Activated CD4-positive, alpha-beta T cell treated with anti-CD3 and anti-CD28 coated beads for 36 hours (primary cell): ENCODE measurements at regions of chr3 and their contacts with region 1.

Region 1: DNA sequence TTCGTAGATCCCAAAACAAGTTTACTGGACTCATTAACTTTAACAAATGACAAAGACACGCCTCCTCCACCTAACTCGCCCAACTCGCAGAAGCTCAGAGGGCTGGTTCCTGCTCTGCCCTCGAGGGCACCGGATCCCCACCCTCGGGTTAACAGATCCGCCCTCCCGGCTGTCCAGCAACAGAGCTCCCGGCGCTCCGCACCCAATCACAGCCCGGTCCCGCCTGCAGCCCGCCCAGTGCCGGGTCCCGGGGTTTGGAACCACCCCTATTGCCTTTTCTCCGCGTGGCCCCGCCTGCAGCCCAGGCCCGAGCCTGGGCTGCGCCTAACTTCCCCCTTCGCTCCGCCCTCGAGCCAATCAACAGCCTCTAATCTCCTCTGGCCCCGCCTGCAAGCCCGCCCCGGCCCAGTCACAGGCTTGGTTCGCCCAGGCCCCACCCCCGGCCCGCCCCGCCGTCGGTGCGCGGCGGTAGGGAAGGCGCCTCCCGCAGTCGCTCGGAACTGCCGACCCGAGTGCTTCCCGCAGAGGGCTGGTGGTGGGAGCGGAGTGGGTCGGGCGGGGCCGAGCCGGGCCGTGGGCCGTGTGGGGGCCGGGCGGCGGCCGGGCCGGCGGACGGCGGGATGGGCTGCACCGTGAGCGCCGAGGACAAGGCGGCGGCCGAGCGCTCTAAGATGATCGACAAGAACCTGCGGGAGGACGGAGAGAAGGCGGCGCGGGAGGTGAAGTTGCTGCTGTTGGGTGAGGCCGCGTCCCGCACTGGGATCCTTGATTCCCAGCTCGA is at the start of gene GNAI2:
- DNase-seq: peak; percentile 99
- ATAC-seq: peak; percentile 92
- H3K4me3 Mint-ChIP-seq: peak within 1 kb of the TSS; percentile 90
- H3K27ac Mint-ChIP-seq: peak within 1 kb of the TSS; percentile 96
- H3K4me1 Mint-ChIP-seq: peaks cover 31% of the 10 kb centered on the region
- H3K27me3 Mint-ChIP-seq: no peaks in the 10 kb centered on the region
- total RNA-seq, gene GNAI2: 280 to 341 TPM

Region 2: DNA sequence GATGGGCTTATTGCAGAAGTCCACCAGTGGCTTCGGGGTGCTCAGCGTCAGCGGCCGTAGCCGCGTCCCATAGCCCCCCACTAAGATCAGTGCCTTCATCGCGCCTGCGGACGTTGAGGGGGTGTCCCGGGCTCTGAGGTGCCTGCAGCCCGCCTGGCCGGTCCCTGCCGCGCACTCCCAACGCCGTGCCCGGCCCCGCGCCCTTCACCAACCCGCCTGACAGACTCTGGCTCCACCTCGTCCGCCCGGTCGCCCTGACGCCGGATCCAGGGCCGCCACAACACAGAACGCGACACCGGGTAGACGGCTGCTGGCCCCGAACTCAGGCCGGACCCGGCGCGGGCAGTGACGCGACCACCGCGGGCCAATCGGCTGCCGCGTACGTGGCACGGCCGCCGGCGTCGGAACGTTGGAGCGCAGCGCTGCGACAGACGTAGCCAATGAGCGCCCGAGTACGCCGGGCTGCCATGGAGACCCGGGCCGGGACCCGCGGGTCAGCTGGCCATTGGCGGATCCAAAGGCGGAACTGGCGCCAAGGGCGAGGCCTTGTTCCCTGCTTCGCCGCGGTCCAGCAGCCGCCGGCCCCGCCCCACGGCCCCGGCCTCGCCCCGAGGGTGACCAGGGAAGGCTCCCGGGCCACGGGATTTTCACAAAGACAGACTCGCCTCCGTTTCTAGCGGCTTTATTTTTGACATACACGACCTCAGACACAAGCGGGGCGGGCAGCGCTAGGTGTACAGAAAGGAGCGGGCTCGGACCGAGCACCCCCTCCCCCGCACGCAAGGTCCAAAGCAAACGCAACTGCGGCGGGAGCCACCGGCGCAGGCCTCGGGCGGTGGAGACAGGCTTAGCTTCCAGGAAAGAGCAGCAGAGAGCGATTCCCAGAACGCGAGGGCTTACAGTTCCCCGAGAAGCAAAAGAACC is 512.0 kb before region 1 on chr3 and contains the start of gene GMPPB:
- CTCF ChIA-PET with region 1: no interaction called
- POLR2A ChIA-PET with region 1: no interaction called
- intact Hi-C with region 1: loop called in 1 of 2 experiments (anchors 5 kb)
- DNase-seq: peak; percentile 97
- ATAC-seq: peak; percentile 87
- H3K4me3 Mint-ChIP-seq: peak within 1 kb of the TSS; percentile 92
- H3K27ac Mint-ChIP-seq: peak within 1 kb of the TSS; percentile 96
- H3K4me1 Mint-ChIP-seq: peaks cover 22% of the 10 kb centered on the region
- H3K27me3 Mint-ChIP-seq: no peaks in the 10 kb centered on the region
- total RNA-seq, gene GMPPB: 21.0 to 32.1 TPM

Region 3: DNA sequence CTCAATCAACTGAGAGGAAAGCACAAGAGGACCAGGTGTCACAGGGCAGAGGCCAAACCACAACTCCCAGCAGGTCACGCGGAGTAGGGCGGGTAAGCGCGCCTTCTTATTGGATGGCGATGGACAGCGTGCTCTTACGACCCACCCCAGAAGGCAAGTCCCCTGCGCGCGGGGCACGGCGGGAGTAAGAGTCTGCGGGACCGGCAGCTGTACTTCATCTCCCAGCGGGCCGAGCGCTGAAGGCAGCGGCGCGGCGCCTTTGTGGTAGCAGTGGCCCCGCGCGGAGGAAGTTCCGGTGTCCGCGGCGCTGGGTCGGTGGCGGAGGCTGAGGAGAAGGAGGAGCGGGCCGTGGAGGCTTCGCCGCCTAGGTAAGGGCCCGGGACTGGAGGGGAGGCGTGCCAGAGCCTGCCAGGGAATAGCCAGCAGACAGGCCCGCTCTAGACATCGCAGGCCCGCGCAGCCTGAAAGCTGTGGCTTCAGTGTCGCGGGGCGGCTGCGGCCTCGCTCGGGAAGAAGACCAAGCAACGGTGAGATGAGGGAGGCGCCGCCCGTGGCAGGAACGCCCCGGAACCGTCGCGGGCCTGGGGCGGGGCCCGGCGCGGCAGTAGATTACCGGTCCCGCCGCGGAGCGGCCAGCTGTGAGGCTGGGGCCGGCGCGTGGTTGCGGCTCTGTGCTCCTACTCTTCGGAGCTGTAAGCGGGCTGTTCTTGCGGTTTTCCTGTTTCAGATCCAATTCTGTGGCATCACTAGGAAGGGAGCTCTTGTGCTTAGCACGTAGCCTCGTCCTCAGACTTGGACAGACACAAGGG is 295.8 kb before region 1 on chr3 and contains the start of gene RBM6:
- CTCF ChIA-PET with region 1: no interaction called
- POLR2A ChIA-PET with region 1: no interaction called
- intact Hi-C with region 1: loop called in 1 of 2 experiments (anchors 5 kb)
- DNase-seq: peak; percentile 98
- ATAC-seq: peak; percentile 99
- H3K4me3 Mint-ChIP-seq: peak within 1 kb of the TSS; percentile 98
- H3K27ac Mint-ChIP-seq: peak within 1 kb of the TSS; percentile 91
- H3K4me1 Mint-ChIP-seq: peaks cover 20% of the 10 kb centered on the region
- H3K27me3 Mint-ChIP-seq: no peaks in the 10 kb centered on the region
- total RNA-seq, gene RBM6: 69.3 to 75.1 TPM

Region 4: GRCh38 chr3:50260027-50260941 is 24.4 kb after region 1 on chr3:
- CTCF ChIA-PET with region 1: interaction called, 4 read pairs
- POLR2A ChIA-PET with region 1: interaction called, 5 read pairs
- intact Hi-C with region 1: loop called in 1 of 2 experiments (anchors 1 kb)
- DNase-seq: peak; percentile 94
- ATAC-seq: peak; percentile 91
- H3K4me3 Mint-ChIP-seq: peak overlapping the region; percentile 61
- H3K27ac Mint-ChIP-seq: peak overlapping the region; percentile 65
- H3K4me1 Mint-ChIP-seq: peaks cover 4% of the 10 kb centered on the region
- H3K27me3 Mint-ChIP-seq: no peaks in the 10 kb centered on the region

Region 5: DNA sequence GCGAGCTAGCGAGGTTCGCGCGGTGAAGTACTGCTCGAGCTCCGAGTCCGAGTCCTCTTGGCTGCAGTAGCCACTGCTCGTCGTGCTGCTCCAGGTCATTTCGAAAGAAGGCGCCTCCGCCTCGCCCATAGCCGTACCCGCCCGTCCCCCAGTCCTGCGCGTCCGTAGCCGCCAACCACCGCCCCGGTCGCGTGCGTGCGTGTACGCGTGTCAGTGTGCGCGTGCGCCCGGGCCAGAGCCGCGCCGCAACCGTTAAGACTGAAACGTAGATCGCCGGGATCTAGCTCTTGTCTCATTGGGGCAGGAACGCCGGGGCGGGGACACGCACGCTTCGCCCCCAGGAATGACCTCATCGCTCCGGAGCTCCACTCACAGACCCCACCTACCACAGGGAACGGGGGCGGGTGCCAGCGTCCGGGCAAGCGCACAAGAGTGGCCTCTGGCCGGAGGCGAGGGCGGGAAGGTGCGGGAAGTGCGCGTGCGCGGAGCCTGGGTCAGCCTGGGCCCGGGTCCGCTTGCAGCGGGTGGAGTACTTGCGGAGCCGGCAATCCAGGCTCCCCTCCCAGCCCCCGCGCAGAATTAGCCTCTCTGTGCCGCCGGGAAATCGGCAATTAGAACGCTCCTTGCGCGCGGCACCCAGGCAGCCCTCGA is 101.4 kb after region 1 on chr3:
- CTCF ChIA-PET with region 1: no interaction called
- POLR2A ChIA-PET with region 1: interaction called, 3 read pairs
- intact Hi-C with region 1: loop called in 1 of 2 experiments (anchors 1 kb)
- DNase-seq: peak; percentile 99
- ATAC-seq: peak; percentile 82
- H3K4me3 Mint-ChIP-seq: peak overlapping the region; percentile 83
- H3K27ac Mint-ChIP-seq: peak overlapping the region; percentile 91
- H3K4me1 Mint-ChIP-seq: peaks cover 50% of the 10 kb centered on the region
- H3K27me3 Mint-ChIP-seq: no peaks in the 10 kb centered on the region